Caco-2 (cell line): ENCODE measurements at regions of chr6 and their contacts with region 1.

Region 1: GRCh38 chr6:26054857-26055669 is 32.2 kb upstream of the HFE start:
- DNase-seq: peak; percentile 87 to 90
- H3K4me3 ChIP-seq: peak overlapping the region; percentile 64
- H3K4me3 Mint-ChIP-seq: peak overlapping the region; percentile 83
- H3K27ac Mint-ChIP-seq: peak overlapping the region; percentile 93
- H3K4me1 ChIP-seq: peaks cover 8% of the 10 kb centered on the region
- H3K4me1 Mint-ChIP-seq: peaks cover 6% of the 10 kb centered on the region
- H3K27me3 ChIP-seq: no peaks in the 10 kb centered on the region
- H3K27me3 Mint-ChIP-seq: no peaks in the 10 kb centered on the region
- CTCF ChIP-seq: peak in 1 of 2 experiments; percentile 14

Region 2: DNA sequence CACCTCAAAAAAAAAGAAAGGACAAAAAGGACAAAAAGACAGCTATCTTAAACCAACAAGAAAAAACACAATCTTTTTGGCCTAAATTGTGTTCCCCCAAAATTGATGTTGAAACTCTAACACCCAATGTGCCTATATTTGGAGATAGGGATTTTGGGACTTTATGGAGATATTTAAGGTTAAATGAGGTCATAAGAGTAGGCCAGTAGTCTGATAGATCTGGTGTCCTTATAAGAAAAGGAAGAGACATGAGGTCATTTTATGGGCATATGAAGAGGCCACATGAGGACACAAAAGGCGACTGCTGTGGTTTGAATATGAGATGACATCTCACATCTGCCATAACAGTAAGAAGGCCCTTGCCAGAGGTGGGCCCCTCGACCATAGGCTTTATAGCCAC is 43.0 kb before region 1 on chr6:
- CTCF ChIA-PET with region 1: no interaction called
- POLR2A ChIA-PET with region 1: no interaction called
- intact Hi-C with region 1: no loop called
- DNase-seq: no peak
- H3K4me3 ChIP-seq: no peak overlapping the region
- H3K4me3 Mint-ChIP-seq: no peak overlapping the region
- H3K27ac Mint-ChIP-seq: no peak overlapping the region
- H3K4me1 ChIP-seq: no peaks in the 10 kb centered on the region
- H3K4me1 Mint-ChIP-seq: no peaks in the 10 kb centered on the region
- H3K27me3 ChIP-seq: no peaks in the 10 kb centered on the region
- H3K27me3 Mint-ChIP-seq: no peaks in the 10 kb centered on the region
- CTCF ChIP-seq: no peak

Region 3: GRCh38 chr6:26025894-26026832 is 28.9 kb before region 1 on chr6:
- CTCF ChIA-PET with region 1: interaction called, 8 read pairs
- POLR2A ChIA-PET with region 1: interaction called, 56 read pairs
- intact Hi-C with region 1: loop called (anchors 1 kb)
- DNase-seq: peak; percentile 94 to 95
- H3K4me3 ChIP-seq: peak overlapping the region; percentile 74
- H3K4me3 Mint-ChIP-seq: peak overlapping the region; percentile 85
- H3K27ac Mint-ChIP-seq: peak overlapping the region; percentile 100
- H3K4me1 ChIP-seq: peaks cover 18% of the 10 kb centered on the region; the same call in 1 of the 2 replicates
- H3K4me1 Mint-ChIP-seq: peaks cover 35% of the 10 kb centered on the region
- H3K27me3 ChIP-seq: no peaks in the 10 kb centered on the region
- H3K27me3 Mint-ChIP-seq: peaks cover 4% of the 10 kb centered on the region
- CTCF ChIP-seq: peak; percentile 81 to 87

Region 4: DNA sequence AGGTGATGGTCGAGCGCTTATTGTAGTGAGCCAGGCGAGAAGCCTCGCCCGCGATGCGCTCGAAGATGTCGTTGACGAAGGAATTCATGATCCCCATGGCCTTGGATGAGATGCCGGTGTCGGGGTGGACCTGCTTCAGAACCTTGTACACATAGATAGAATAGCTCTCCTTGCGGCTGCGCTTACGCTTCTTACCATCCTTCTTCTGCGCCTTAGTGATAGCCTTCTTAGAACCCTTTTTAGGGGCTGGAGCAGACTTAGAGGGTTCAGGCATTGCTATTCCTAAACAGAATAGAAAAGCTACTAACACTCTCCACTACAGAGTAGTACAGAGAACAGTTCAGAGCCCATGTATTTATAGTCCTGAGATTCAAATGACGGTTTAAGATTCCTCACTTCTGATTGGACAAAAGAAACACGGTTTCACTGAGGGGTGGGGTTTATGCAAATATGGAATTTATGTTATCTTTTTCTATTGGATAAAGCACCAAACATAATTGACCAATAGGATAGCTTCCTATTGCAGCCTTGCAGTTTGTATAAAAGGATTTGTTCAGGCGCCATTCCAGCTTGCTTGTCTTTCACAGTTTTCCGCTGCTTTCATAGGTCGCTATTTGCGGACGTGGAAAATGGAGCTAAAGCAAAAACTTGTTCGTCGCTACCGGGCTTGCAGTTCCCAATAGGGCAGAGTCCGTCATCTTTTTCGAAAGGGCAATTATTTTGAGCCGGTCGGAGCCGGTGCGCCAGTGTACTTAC is 11.5 kb before region 1 on chr6:
- CTCF ChIA-PET with region 1: no interaction called
- POLR2A ChIA-PET with region 1: no interaction called
- intact Hi-C with region 1: no loop called
- DNase-seq: no peak
- H3K4me3 ChIP-seq: no peak overlapping the region
- H3K4me3 Mint-ChIP-seq: no peak overlapping the region
- H3K27ac Mint-ChIP-seq: no peak overlapping the region
- H3K4me1 ChIP-seq: peaks cover 10% of the 10 kb centered on the region; the same call in 1 of the 2 replicates
- H3K4me1 Mint-ChIP-seq: no peaks in the 10 kb centered on the region
- H3K27me3 ChIP-seq: no peaks in the 10 kb centered on the region
- H3K27me3 Mint-ChIP-seq: no peaks in the 10 kb centered on the region
- CTCF ChIP-seq: no peak